ENCODE measurements at regions of chr11 and their contacts with region 1.

Region 1: GRCh38 chr11:86740709-86741483 is 59.4 kb upstream of the PRSS23 start:
- DNase-seq: peak; percentile 77 to 95
- ATAC-seq: peak; percentile 48 to 57
- H3K4me3 ChIP-seq: no peak overlapping the region
- H3K27ac ChIP-seq: peak overlapping the region; percentile 88 to 93
- H3K4me1 ChIP-seq: peaks cover 88% of the 10 kb centered on the region
- CTCF ChIP-seq: no peak
- EP300 ChIP-seq: peak; percentile 71 to 80; a peak in 3 of 5 replicates
- POLR2A ChIP-seq: no peak
- RAD21 ChIP-seq: peak; percentile 20 to 43; a peak in 3 of 5 replicates

Region 2: GRCh38 chr11:86490582-86490981 is 250.3 kb before region 1 on chr11:
- CTCF ChIA-PET with region 1: no interaction called
- POLR2A ChIA-PET with region 1: no interaction called
- DNase-seq: no peak
- ATAC-seq: no peak
- H3K4me3 ChIP-seq: no peak overlapping the region
- H3K27ac ChIP-seq: no peak overlapping the region
- H3K4me1 ChIP-seq: peaks cover 25% of the 10 kb centered on the region
- CTCF ChIP-seq: no peak
- EP300 ChIP-seq: no peak
- POLR2A ChIP-seq: no peak
- RAD21 ChIP-seq: no peak

Region 3: GRCh38 chr11:86719781-86720463 is 21.0 kb before region 1 on chr11:
- CTCF ChIA-PET with region 1: interaction called, 7 read pairs
- POLR2A ChIA-PET with region 1: interaction called, 14 read pairs
- DNase-seq: peak; percentile 56 to 84
- ATAC-seq: peak; percentile 79 to 90
- H3K4me3 ChIP-seq: no peak overlapping the region
- H3K27ac ChIP-seq: peak overlapping the region; percentile 89 to 94
- H3K4me1 ChIP-seq: peaks cover 36% of the 10 kb centered on the region
- CTCF ChIP-seq: no peak
- EP300 ChIP-seq: peak; percentile 50 to 82; a peak in 3 of 5 replicates
- POLR2A ChIP-seq: no peak
- RAD21 ChIP-seq: peak in 1 of 2 experiments; percentile 21; a peak in 1 of 5 replicates

Measured in A549 (cell line).